CD14-positive monocyte (primary cell): ENCODE measurements at regions of chr19 and their contacts with region 1.

Region 1: DNA sequence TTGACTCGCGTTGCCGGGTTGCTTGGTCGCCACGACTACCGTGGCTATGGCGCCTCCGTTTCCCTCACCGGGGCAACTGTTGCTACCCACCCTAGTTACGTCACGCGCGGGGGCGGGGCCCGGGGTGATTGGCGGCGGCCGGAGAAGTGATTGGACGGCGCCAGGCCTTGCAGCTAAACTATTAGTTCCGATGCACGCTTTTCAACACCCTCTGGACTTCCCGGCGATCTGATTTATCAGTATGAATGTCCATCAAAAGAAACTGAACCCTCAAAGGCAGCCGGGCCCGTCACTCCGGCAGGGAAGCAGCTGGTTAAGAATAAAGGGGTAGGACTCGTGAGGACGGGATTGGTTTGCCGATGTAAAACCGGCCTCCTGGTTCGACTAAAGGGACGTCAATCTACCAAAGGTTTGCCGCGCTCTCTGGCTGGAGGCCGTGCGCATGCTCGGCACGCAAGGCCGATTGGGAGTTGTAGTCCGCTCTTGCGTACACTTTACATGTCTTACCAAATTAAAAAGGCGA is at the start of gene RFX1:
- DNase-seq: peak; percentile 99 to 100 (median 99)
- H3K4me3 ChIP-seq: peak within 1 kb of the TSS; percentile 50 to 80 (median 68)
- H3K4me3 Mint-ChIP-seq: peak within 1 kb of the TSS; percentile 83 to 95
- H3K27ac ChIP-seq: peak within 1 kb of the TSS; percentile 91 to 98
- H3K27ac Mint-ChIP-seq: peak within 1 kb of the TSS; percentile 99 to 100 (median 100)
- H3K4me1 ChIP-seq: peaks cover 38 to 45% of the 10 kb centered on the region in 2 donors
- H3K4me1 Mint-ChIP-seq: peaks cover 39% of the 10 kb centered on the region
- H3K27me3 ChIP-seq: no peaks in the 10 kb centered on the region
- H3K27me3 Mint-ChIP-seq: peaks cover 0 to 5% (median 0%) of the 10 kb centered on the region in 3 donors
- CTCF ChIP-seq: no peak
- polyA plus RNA-seq, gene RFX1: 0.89 to 12.8 (median 0.95) TPM

Region 2: GRCh38 chr19:13952154-13953035 is 53.9 kb before region 1 on chr19 and contains the start of gene DCAF15:
- intact Hi-C with region 1: loop called in 1 of 2 experiments (anchors 2 kb)
- DNase-seq: peak; percentile 99 to 100 (median 100)
- H3K4me3 ChIP-seq: peak within 1 kb of the TSS; percentile 53 to 87 (median 74)
- H3K4me3 Mint-ChIP-seq: peak within 1 kb of the TSS; percentile 82 to 92
- H3K27ac ChIP-seq: peak within 1 kb of the TSS in 1 of 2 donors; percentile 80
- H3K27ac Mint-ChIP-seq: peak within 1 kb of the TSS; percentile 75 to 89 (median 84)
- H3K4me1 ChIP-seq: peaks cover 16 to 21% of the 10 kb centered on the region in 2 donors
- H3K4me1 Mint-ChIP-seq: peaks cover 17% of the 10 kb centered on the region
- H3K27me3 ChIP-seq: no peaks in the 10 kb centered on the region
- H3K27me3 Mint-ChIP-seq: peaks cover 0 to 2% (median 0%) of the 10 kb centered on the region in 3 donors
- CTCF ChIP-seq: no peak
- polyA plus RNA-seq, gene DCAF15: 2.8 to 116 (median 3.4) TPM

Region 3: DNA sequence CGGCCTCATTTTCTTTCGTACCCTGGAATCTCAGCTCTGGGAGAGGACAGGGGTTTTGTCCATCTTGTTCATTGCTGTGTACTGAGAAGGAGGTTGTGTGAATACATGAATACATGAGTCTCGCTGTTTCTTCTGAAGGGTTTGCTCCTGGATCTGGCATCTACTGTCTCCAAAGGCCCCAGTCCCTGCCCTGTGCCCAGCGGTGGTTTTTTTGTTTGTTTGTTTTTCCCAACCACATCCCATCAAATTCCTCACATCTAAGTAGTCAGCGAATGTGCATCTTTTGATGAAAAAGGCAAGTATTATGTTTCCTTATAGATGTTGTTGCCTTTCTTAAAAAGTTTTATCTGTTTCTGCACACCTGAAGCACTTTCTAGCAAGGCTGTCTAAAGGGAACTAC is 41.5 kb before region 1 on chr19:
- intact Hi-C with region 1: loop called in 1 of 2 experiments (anchors 5 kb)
- DNase-seq: no peak
- H3K4me3 ChIP-seq: no peak overlapping the region
- H3K4me3 Mint-ChIP-seq: no peak overlapping the region
- H3K27ac ChIP-seq: peak overlapping the region in 1 of 2 donors; percentile 9
- H3K27ac Mint-ChIP-seq: peak overlapping the region in 3 of 7 donors; percentile 46 to 80 (median 75)
- H3K4me1 ChIP-seq: no peaks in the 10 kb centered on the region
- H3K4me1 Mint-ChIP-seq: no peaks in the 10 kb centered on the region
- H3K27me3 ChIP-seq: no peaks in the 10 kb centered on the region
- H3K27me3 Mint-ChIP-seq: no peaks in the 10 kb centered on the region
- CTCF ChIP-seq: no peak

Region 4: GRCh38 chr19:13986348-13986904 is 19.9 kb before region 1 on chr19:
- intact Hi-C with region 1: loop called (anchors 1 to 2 kb)
- DNase-seq: peak; percentile 99
- H3K4me3 ChIP-seq: peak overlapping the region in 2 of 3 experiments; percentile 10 to 59
- H3K4me3 Mint-ChIP-seq: peak overlapping the region; percentile 74 to 85
- H3K27ac ChIP-seq: peak overlapping the region; percentile 94 to 100
- H3K27ac Mint-ChIP-seq: peak overlapping the region; percentile 98 to 99 (median 99)
- H3K4me1 ChIP-seq: peaks cover 47 to 55% of the 10 kb centered on the region in 2 donors
- H3K4me1 Mint-ChIP-seq: peaks cover 61% of the 10 kb centered on the region
- H3K27me3 ChIP-seq: no peaks in the 10 kb centered on the region
- H3K27me3 Mint-ChIP-seq: peaks cover 0 to 7% (median 3%) of the 10 kb centered on the region in 3 donors
- CTCF ChIP-seq: no peak

Region 5: DNA sequence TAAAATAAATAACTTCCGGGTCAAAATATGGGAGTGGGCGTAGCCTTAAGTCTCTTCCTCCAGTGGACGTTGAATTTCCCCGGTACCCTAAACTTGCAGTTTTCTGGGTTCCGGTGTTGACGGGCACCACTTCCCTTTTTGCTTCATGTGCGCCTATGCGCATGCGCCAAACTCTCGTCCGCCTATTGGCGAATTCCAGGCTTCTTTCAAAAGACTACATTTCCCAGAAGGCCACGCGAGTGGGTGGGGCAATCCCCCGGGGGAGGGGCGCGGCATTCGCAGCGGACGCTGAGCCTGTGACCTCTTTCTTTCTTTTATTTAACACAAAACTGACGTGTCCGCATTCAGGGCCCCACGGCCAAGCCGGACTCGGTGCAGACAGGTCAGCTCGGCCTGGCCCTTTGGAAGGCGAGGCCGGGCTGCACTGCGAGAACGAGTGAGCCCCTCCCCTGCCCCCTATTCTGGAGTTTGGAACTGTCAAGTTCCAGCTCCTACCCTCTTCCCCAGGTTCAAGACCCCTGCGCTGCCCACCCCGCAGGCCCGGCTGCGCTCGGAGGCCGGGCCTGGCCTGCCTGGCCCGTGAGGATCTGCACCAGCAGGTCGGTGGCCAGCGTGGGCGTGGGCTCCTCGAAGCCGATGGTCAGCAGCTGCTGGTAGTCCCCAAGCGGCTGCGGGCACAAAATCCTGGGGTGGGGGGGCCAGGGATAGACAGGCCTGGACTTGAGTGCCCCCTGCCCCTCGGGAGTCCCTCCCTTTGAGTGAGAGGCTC is 75.2 kb after region 1 on chr19:
- intact Hi-C with region 1: loop called in 1 of 2 experiments (anchors 1 kb)
- DNase-seq: peak; percentile 99 to 100 (median 99)
- H3K4me3 ChIP-seq: peak overlapping the region; percentile 79 to 96 (median 82)
- H3K4me3 Mint-ChIP-seq: peak overlapping the region; percentile 88 to 95
- H3K27ac ChIP-seq: peak overlapping the region; percentile 85
- H3K27ac Mint-ChIP-seq: peak overlapping the region; percentile 91 to 98 (median 94)
- H3K4me1 ChIP-seq: peaks cover 54 to 58% of the 10 kb centered on the region in 2 donors
- H3K4me1 Mint-ChIP-seq: peaks cover 39% of the 10 kb centered on the region
- H3K27me3 ChIP-seq: no peaks in the 10 kb centered on the region
- H3K27me3 Mint-ChIP-seq: peaks cover 0 to 5% (median 2%) of the 10 kb centered on the region in 3 donors
- CTCF ChIP-seq: no peak

Region 6: DNA sequence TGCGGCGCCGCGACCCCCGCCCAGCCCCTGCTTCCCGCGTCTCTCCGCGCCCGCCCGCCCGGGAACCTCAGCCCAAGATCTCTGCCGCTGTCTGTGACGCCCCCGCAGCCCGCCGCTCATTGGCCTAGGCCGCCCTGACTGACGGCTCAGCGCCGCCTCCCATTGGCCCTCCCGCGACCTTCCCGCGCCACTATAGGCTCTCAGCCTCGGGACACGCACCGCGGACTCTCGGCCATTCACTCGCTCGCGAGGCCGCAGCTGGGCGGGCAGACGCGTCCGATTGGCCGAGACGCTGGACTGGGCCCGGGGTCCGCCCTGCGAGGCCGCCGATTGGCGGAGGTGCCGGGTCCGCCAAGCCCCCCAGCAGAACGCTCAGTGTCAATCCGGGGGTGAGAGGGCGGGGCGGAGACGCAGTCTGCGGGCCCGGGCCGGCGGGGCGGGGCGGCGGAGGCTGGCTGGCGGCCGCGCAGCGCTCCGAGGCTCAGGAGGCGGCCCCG is 111.4 kb after region 1 on chr19 and contains the start of gene PRKACA:
- intact Hi-C with region 1: loop called in 1 of 2 experiments (anchors 5 kb)
- DNase-seq: peak; percentile 96 to 98 (median 98)
- H3K4me3 ChIP-seq: peak within 1 kb of the TSS; percentile 88 to 99 (median 90)
- H3K4me3 Mint-ChIP-seq: peak within 1 kb of the TSS; percentile 91 to 96
- H3K27ac ChIP-seq: peak within 1 kb of the TSS; percentile 98 to 99
- H3K27ac Mint-ChIP-seq: peak within 1 kb of the TSS; percentile 100
- H3K4me1 ChIP-seq: peaks cover 63 to 69% of the 10 kb centered on the region in 2 donors
- H3K4me1 Mint-ChIP-seq: peaks cover 65% of the 10 kb centered on the region
- H3K27me3 ChIP-seq: no peaks in the 10 kb centered on the region
- H3K27me3 Mint-ChIP-seq: peaks cover 0 to 1% (median 0%) of the 10 kb centered on the region in 3 donors
- CTCF ChIP-seq: no peak
- polyA plus RNA-seq, gene PRKACA: 2.0 to 231 (median 3.8) TPM